T-cell (primary cell): ENCODE measurements at regions of chrX and their contacts with region 1.

Region 1: DNA sequence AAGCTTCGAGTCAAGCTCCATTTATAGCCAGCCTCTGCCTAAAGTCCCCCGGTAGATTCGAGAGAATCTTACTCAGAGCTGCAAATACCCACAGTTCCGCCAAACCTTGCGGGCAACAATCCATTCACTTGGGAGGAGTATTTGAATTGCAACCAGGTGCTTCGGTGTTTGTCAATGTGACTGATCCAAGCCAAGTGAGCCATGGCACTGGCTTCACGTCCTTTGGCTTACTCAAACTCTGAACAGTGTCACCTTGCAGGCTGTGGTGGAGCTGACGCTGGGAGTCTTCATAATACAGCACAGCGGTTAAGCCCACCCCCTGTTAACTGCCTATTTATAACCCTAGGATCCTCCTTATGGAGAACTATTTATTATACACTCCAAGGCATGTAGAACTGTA is 11.2 kb downstream of the CD40LG start:
- DNase-seq: peak in 1 of 35 experiments; percentile 27
- ATAC-seq: peak; percentile 10 to 14 (median 13)
- H3K4me3 ChIP-seq: no peak overlapping the region
- H3K4me3 Mint-ChIP-seq: peak overlapping the region; percentile 37 to 86 (median 58)
- H3K27ac ChIP-seq: peak overlapping the region; percentile 64
- H3K27ac Mint-ChIP-seq: peak overlapping the region; percentile 88 to 99
- H3K4me1 ChIP-seq: peaks cover 22 to 71% of the 10 kb centered on the region in 2 experiments
- H3K4me1 Mint-ChIP-seq: peaks cover 79 to 93% (median 88%) of the 10 kb centered on the region in 3 donors
- H3K27me3 ChIP-seq: no peaks in the 10 kb centered on the region
- H3K27me3 Mint-ChIP-seq: peaks cover 0 to 17% of the 10 kb centered on the region in 2 donors

Region 2: GRCh38 chrX:136541291-136541690 is 117.9 kb before region 1 on chrX:
- CTCF ChIA-PET with region 1: no interaction called
- POLR2A ChIA-PET with region 1: no interaction called
- DNase-seq: no peak
- ATAC-seq: no peak
- H3K4me3 ChIP-seq: no peak overlapping the region
- H3K4me3 Mint-ChIP-seq: no peak overlapping the region
- H3K27ac ChIP-seq: no peak overlapping the region
- H3K27ac Mint-ChIP-seq: no peak overlapping the region
- H3K4me1 ChIP-seq: peaks cover 4 to 14% of the 10 kb centered on the region in 2 experiments
- H3K4me1 Mint-ChIP-seq: peaks cover 26 to 36% (median 34%) of the 10 kb centered on the region in 3 donors
- H3K27me3 ChIP-seq: no peaks in the 10 kb centered on the region
- H3K27me3 Mint-ChIP-seq: peaks cover 0 to 25% of the 10 kb centered on the region in 2 donors

Region 3: DNA sequence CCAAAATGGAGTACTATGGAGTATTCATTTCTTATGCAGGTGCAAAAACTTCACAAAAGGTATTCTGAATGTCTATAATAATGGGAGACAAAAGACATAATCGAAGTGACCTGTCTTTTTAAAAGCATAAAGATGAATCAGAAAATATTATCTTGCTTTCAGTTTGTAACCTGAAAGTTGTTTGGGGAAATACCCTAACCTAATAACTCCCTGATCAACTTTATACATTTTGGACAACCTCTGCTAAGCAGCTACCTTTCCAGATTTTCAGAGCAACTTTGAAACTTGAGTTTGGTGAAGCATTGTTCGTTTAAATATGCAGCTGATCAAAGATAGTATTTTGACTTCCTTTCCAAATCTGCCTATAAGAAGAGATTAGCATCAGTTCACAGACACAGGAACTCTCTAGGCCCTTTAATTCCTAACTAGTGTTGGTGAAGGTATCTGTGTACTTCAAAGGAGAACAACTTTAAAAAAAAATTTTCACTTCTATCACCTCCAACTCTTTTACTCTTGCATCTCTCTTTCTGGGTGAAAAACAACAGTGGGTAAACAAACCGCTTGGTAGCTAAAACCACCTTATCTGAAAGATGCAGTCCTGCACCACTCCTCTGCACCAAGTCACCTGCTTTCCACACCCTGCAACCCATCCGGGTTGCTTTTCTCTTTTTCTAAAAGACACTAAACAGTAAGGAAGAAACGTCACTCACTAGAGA is 15.3 kb after region 1 on chrX:
- CTCF ChIA-PET with region 1: interaction called in 1 of 2 experiments, 4 read pairs
- POLR2A ChIA-PET with region 1: interaction called in 1 of 2 experiments, 11 read pairs
- DNase-seq: peak in 24 of 35 experiments; percentile 19 to 69 (median 40)
- ATAC-seq: peak; percentile 82 to 89 (median 86)
- H3K4me3 ChIP-seq: no peak overlapping the region
- H3K4me3 Mint-ChIP-seq: peak overlapping the region; percentile 47 to 68 (median 54)
- H3K27ac ChIP-seq: peak overlapping the region; percentile 80
- H3K27ac Mint-ChIP-seq: peak overlapping the region; percentile 92 to 96
- H3K4me1 ChIP-seq: peaks cover 28 to 44% of the 10 kb centered on the region in 2 experiments
- H3K4me1 Mint-ChIP-seq: peaks cover 79 to 91% (median 83%) of the 10 kb centered on the region in 3 donors
- H3K27me3 ChIP-seq: no peaks in the 10 kb centered on the region
- H3K27me3 Mint-ChIP-seq: peaks cover 0 to 21% of the 10 kb centered on the region in 2 donors

Region 4: DNA sequence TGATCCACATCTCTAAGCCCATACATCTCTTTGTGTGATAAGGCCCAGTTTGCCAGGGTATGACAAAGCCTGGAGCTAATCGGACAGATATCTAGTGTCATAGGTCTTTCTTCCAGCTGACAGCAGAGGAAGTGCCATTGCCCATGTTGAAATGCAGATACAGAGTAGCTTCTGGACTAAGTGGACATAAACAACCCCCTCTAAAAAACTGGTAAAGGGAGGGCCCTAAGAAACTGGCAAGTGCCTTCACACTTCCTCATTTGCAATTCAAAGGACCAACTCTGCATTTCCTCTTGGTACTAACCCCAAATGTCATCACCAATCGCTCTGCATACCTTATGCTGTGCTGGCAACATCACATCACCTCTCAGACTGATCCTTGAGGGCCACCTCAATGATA is 100.8 kb after region 1 on chrX:
- CTCF ChIA-PET with region 1: no interaction called
- POLR2A ChIA-PET with region 1: no interaction called
- DNase-seq: peak in 2 of 35 experiments; percentile 13 to 37
- ATAC-seq: peak; percentile 64 to 76 (median 68)
- H3K4me3 ChIP-seq: no peak overlapping the region
- H3K4me3 Mint-ChIP-seq: no peak overlapping the region
- H3K27ac ChIP-seq: peak overlapping the region; percentile 4
- H3K27ac Mint-ChIP-seq: peak overlapping the region; percentile 42 to 65
- H3K4me1 ChIP-seq: peaks cover 24 to 27% of the 10 kb centered on the region in 2 experiments
- H3K4me1 Mint-ChIP-seq: peaks cover 55 to 70% (median 59%) of the 10 kb centered on the region in 3 donors
- H3K27me3 ChIP-seq: no peaks in the 10 kb centered on the region
- H3K27me3 Mint-ChIP-seq: peaks cover 0 to 3% of the 10 kb centered on the region in 2 donors

Region 5: DNA sequence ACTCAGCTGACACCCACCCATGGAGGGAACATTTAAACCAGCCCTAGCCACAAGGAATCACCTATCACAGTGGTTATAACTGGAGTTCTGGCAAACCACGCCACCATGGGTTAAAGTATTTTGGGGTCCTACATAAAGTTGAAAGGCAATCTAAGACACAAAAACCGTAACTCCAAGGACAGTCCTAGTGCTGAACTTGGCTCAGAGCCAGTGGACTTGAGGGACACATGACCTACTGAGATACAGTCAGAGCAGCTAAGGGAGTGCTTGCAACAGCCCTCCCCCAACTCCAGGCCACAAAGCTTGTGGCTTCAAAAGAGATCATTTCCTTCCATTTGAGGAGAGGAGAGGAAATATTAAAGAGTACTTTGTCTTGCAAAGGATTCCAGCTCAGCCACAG is 1751.9 kb after region 1 on chrX:
- CTCF ChIA-PET with region 1: no interaction called
- POLR2A ChIA-PET with region 1: no interaction called
- DNase-seq: no peak
- ATAC-seq: no peak
- H3K4me3 ChIP-seq: no peak overlapping the region
- H3K4me3 Mint-ChIP-seq: no peak overlapping the region
- H3K27ac ChIP-seq: no peak overlapping the region
- H3K27ac Mint-ChIP-seq: no peak overlapping the region
- H3K4me1 ChIP-seq: no peaks in the 10 kb centered on the region
- H3K4me1 Mint-ChIP-seq: no peaks in the 10 kb centered on the region
- H3K27me3 ChIP-seq: no peaks in the 10 kb centered on the region
- H3K27me3 Mint-ChIP-seq: peaks cover 0 to 11% of the 10 kb centered on the region in 2 donors